Heart right ventricle (tissue), 16 donors: ENCODE measurements at regions of chr5 and their contacts with region 1.

Region 1: GRCh38 chr5:31581498-31582099 is 49.5 kb downstream of the C5orf22 start:
- DNase-seq: no peak
- ATAC-seq: peak in 3 of 8 donors; percentile 35 to 54 (median 53)
- H3K4me3 ChIP-seq: no peak overlapping the region
- H3K27ac ChIP-seq: no peak overlapping the region
- H3K4me1 ChIP-seq: peaks cover 0 to 5% (median 0%) of the 10 kb centered on the region in 9 donors
- H3K27me3 ChIP-seq: no peaks in the 10 kb centered on the region
- CTCF ChIP-seq: peak; percentile 42 to 76 (median 60)

Region 2: GRCh38 chr5:31492869-31493268 is 88.7 kb before region 1 on chr5:
- intact Hi-C with region 1: no loop called
- DNase-seq: no peak
- ATAC-seq: no peak
- H3K4me3 ChIP-seq: no peak overlapping the region
- H3K27ac ChIP-seq: no peak overlapping the region
- H3K4me1 ChIP-seq: no peaks in the 10 kb centered on the region
- H3K27me3 ChIP-seq: no peaks in the 10 kb centered on the region
- CTCF ChIP-seq: no peak

Region 3: DNA sequence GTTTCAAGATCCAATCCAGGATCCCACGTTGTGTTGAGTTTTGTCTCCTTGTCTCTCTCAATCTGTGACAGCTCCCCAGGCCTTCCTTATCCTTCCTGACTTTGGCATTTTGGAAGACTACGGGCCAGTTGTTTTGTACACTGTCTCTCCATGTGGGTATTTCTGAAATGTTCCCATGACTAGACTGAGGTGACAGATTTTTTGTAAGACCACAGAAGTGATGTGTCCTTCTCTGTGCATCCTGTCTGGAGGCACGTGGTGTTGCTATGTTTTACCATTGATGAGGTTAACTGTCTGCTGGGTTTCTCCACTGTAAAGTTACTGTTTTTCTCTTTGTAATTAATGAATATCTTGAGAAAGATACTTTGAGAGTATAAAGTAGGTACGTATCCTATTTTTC is 41.6 kb after region 1 on chr5:
- intact Hi-C with region 1: loop called in 1 of 10 experiments (anchors 5 kb)
- DNase-seq: no peak
- ATAC-seq: no peak
- H3K4me3 ChIP-seq: no peak overlapping the region
- H3K27ac ChIP-seq: no peak overlapping the region
- H3K4me1 ChIP-seq: peaks cover 0 to 24% (median 6%) of the 10 kb centered on the region in 9 donors
- H3K27me3 ChIP-seq: no peaks in the 10 kb centered on the region
- CTCF ChIP-seq: no peak

Region 4: DNA sequence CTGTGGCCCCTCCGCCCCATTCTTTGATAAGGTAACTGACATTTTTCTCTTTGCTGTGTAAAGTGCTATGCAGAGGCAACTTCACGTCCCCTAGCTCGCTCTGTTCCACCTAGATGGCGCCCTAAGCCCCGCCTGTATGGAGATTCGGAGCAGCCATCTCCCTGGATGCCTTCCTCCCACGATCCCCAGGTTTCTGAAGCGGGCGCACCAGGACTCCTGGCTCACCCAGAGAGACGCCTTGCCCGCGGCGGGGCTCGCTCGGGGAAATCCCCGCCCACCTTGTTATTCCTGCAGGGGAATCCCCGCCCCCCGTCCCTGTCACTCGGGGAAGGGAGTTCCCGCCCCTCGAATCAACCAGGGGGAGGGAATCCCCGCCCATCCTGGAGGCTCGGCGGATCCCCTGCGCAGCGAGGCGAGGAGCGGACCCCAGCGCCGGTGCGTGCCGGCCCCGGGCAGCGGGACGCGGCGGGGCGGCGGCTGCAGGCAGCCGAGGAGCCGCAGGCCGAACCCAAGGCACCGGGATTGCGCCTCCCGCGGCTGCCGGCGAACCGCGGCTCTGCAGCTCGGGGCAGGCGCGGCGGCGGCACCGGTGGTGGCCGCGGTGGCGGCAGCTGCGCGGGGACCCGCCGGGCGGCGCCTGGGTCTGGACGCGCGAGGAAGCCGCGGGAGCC is 57.3 kb after region 1 on chr5 and contains the start of gene PDZD2:
- intact Hi-C with region 1: loop called in 1 of 10 experiments (anchors 5 kb)
- DNase-seq: peak; percentile 86 to 89
- ATAC-seq: peak; percentile 75 to 85 (median 82)
- H3K4me3 ChIP-seq: peak within 1 kb of the TSS; percentile 30 to 92 (median 79)
- H3K27ac ChIP-seq: peak within 1 kb of the TSS; percentile 51 to 86 (median 78)
- H3K4me1 ChIP-seq: peaks cover 13 to 83% (median 47%) of the 10 kb centered on the region in 9 donors
- H3K27me3 ChIP-seq: peaks cover 0 to 26% (median 0%) of the 10 kb centered on the region in 7 donors
- CTCF ChIP-seq: peak in 8 of 9 donors; percentile 10 to 66 (median 41)
- total RNA-seq, gene PDZD2: 41.6 to 117 (median 89.0) TPM

Region 5: GRCh38 chr5:31809050-31809870 is 227.7 kb after region 1 on chr5:
- intact Hi-C with region 1: loop called (anchors 1 to 5 kb)
- DNase-seq: peak; percentile 65 to 75
- ATAC-seq: peak; percentile 80 to 95 (median 91)
- H3K4me3 ChIP-seq: no peak overlapping the region
- H3K27ac ChIP-seq: no peak overlapping the region
- H3K4me1 ChIP-seq: peaks cover 0 to 27% (median 8%) of the 10 kb centered on the region in 9 donors
- H3K27me3 ChIP-seq: no peaks in the 10 kb centered on the region
- CTCF ChIP-seq: peak; percentile 65 to 90 (median 82)

Region 6: DNA sequence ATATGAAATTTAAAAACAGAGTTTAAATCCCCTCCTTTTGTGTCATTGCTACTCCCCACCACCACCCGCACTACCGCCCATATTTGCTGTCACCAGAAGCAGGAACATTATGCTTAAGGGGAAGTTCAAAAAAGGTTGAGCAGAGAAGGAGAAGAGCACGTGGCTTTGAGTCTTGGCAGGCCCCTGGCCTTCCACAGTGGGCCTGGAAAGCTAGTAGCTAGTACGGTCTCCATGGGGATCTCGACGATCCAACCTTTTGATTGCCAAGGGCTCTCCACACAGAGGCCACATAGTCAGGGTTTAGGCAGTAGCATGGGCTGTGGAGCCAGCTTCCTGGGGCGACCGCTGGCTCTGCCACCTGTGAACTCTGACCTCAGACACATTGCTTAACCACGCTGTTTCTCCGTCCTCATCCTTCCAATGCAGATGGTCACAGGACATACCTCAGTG is 502.4 kb after region 1 on chr5:
- intact Hi-C with region 1: loop called in 2 of 10 experiments (anchors 5 to 10 kb)
- DNase-seq: no peak
- ATAC-seq: peak; percentile 41 to 78 (median 62)
- H3K4me3 ChIP-seq: no peak overlapping the region
- H3K27ac ChIP-seq: no peak overlapping the region
- H3K4me1 ChIP-seq: peaks cover 0 to 8% (median 0%) of the 10 kb centered on the region in 9 donors
- H3K27me3 ChIP-seq: no peaks in the 10 kb centered on the region
- CTCF ChIP-seq: no peak

Region 7: DNA sequence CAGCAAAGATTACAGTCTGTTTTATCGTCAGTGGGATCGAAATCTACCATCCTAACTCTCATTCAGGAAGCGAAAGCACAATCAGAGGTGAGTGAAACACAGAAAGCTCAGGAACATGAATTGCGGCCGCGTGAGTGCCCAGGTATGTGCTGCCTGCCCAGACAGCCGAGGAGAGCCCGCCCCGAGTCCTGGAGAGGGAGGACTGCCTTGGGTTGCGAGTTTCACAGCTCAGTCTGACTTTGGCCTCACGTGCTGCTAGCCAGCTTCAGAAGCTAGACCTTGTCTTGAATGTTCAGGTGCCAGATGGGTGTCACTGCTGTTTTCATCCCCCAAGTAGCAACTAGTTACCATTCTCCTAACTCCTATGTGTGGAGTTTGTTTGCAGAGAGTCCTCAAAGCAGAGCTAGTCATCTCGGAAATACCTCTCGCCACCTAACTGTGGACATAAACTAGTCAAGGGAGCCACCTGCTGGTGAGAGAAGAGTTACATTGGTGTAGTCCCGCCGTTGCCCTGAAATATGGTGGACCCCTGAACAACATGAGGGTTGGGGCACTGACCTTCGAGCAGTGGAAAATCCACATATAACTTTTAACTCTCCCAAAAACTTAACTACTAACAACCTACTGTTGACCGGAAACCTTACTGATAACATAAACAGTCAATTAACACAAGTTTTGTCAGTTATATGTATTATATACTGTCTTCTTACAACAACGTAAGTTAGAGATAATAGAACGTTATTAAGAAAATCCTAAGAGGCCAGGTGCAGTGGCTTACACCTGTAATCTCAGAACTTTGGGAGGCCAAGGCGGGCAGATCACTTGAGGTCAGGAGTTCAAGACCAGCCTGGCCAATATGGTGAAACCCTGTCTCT is 511.6 kb after region 1 on chr5:
- intact Hi-C with region 1: loop called (anchors 1 to 10 kb)
- DNase-seq: peak in 1 of 2 donors; percentile 74
- ATAC-seq: peak; percentile 67 to 85 (median 81)
- H3K4me3 ChIP-seq: no peak overlapping the region
- H3K27ac ChIP-seq: peak overlapping the region in 1 of 10 donors; percentile 6
- H3K4me1 ChIP-seq: peaks cover 1 to 35% (median 19%) of the 10 kb centered on the region in 9 donors
- H3K27me3 ChIP-seq: no peaks in the 10 kb centered on the region
- CTCF ChIP-seq: peak; percentile 49 to 82 (median 72)